Activated CD4-positive, alpha-beta memory T cell treated with anti-CD3 and anti-CD28 coated beads for 36 hours (primary cell): ENCODE measurements at regions of chr17 and their contacts with region 1.

Region 1: GRCh38 chr17:49997791-49998703 is 3.0 kb upstream of the DLX3 start:
- DNase-seq: peak; percentile 89
- H3K4me3 Mint-ChIP-seq: no peak overlapping the region
- H3K27ac Mint-ChIP-seq: no peak overlapping the region
- H3K4me1 Mint-ChIP-seq: peaks cover 22% of the 10 kb centered on the region
- H3K27me3 Mint-ChIP-seq: peaks cover 70% of the 10 kb centered on the region

Region 2: DNA sequence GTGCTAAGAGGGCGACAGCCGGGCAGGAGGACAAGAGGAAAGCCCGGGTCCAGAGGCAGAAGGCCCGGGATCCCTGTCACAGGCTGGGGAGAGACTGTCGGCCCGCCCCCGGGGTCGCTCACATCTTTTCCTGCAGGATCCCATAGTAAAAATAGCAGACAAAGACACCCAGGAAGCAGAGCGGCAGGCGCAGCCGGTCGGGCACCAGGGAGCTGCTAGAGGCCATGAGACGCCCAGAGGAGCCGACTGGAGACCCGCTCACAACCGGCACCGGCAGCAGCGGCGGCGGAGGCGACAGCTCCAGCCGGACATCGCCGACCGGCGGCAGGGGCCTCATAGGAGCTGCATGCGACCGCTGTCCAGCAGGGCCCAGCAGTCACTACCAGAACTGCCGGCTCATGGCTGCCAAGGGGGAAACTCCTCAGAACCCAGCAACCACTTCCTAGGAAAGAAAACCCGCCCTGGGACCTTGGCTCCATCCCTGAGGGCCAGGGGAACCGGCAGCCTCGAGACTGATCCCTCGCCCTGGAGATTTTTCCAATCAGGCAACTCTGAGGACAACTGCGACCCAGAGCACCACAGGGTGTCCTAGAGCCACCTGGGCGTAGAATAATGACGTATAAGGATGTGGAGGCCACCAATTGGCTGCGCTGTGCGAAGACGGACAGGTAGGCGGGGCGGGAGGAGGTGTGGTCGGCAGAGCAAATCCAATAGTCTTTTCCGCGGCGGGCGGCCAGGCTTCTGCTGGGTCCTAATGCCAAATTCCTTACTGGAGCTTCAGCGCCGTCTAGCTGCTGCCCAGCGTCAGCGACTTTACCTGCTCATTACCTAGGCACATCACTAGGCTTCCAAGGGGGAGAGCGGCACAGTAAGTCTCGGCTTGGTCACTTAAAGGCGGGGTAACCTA is 290.2 kb before region 1 on chr17 and contains the start of gene SLC35B1:
- CTCF ChIA-PET with region 1: interaction called, 5 read pairs
- POLR2A ChIA-PET with region 1: no interaction called
- intact Hi-C with region 1: loop called (anchors 10 kb)
- DNase-seq: peak; percentile 99
- H3K4me3 Mint-ChIP-seq: peak within 1 kb of the TSS; percentile 91
- H3K27ac Mint-ChIP-seq: peak within 1 kb of the TSS; percentile 98
- H3K4me1 Mint-ChIP-seq: peaks cover 42% of the 10 kb centered on the region
- H3K27me3 Mint-ChIP-seq: no peaks in the 10 kb centered on the region
- total RNA-seq, gene SLC35B1: 48.3 to 54.1 TPM

Region 3: DNA sequence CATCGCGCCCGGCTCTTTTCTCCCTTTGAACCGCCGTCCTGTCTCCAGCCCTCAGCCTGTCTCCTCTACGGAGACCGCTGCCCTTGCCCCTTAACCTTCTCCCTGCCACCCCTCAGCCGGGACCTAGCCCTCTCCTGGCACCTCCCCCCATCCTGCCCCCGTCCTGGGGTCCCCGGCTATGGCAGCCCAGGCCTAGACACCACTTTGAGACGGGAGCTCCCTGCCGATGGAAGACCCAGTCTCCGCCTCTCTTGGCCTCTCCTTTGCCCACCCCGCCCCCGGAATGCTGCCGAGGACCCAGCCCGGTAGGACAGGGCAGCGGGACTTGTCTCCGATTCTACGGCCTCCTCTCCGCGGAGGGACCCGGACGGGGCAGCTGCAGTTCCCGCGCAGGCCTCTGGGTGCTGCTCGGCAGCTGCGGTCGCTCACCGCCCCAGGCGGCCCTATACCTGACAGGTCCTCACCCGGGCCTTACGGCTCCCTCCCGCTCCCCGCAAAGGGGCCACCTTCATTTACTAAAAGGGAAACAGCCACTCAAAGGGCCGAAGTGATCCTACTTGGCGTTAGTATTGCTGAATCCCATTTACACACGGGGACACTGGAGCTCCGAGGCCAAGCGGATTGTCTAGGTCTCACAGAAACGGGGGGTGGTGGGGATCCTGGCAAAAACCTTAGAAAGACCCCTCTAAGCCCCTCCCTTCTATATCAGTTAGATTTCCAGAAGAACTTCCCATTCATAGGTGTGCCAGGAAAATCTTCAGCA is 117.6 kb before region 1 on chr17:
- CTCF ChIA-PET with region 1: interaction called, 138 read pairs
- POLR2A ChIA-PET with region 1: interaction called, 4 read pairs
- intact Hi-C with region 1: loop called (anchors 1 kb)
- DNase-seq: peak; percentile 84
- H3K4me3 Mint-ChIP-seq: no peak overlapping the region
- H3K27ac Mint-ChIP-seq: no peak overlapping the region
- H3K4me1 Mint-ChIP-seq: peaks cover 4% of the 10 kb centered on the region
- H3K27me3 Mint-ChIP-seq: peaks cover 31% of the 10 kb centered on the region

Region 4: GRCh38 chr17:49920064-49920785 is 77.8 kb before region 1 on chr17:
- CTCF ChIA-PET with region 1: interaction called, 19 read pairs
- POLR2A ChIA-PET with region 1: no interaction called
- intact Hi-C with region 1: no loop called
- DNase-seq: no peak
- H3K4me3 Mint-ChIP-seq: no peak overlapping the region
- H3K27ac Mint-ChIP-seq: no peak overlapping the region
- H3K4me1 Mint-ChIP-seq: no peaks in the 10 kb centered on the region
- H3K27me3 Mint-ChIP-seq: peaks cover 14% of the 10 kb centered on the region

Region 5: DNA sequence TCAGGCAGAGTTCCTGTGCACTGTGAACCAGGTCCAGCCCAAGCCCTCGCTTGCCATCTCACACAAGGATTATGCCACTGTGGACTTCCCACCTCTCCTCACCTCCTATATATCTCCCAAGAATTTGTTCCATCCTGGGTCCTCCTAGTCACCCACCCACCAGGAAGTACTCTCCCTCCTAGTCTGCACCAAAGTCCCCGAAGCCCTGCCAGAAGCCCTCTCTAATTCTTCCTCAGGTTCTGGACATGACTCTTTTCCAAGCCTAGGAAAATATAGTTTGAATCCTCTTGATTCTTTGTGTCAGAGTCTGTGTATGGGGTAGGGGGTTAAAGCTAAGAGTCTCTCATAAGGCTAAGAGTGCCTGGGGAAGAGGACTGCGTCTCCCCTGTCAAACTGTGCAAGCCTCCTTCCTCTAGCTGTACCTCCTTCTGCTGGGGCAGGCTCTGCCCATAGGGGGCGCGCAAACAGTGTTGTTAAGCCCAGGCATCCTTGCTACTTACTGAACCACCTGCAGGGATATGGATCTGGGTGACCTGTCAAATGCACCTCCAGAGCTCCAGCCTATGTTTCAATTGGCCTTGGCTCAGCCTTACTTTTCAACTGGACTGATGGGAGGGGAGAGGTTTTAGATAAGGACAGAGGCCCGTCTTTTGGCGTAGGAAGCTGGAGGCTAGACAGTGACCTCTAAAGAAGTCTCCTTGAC is 45.7 kb before region 1 on chr17:
- CTCF ChIA-PET with region 1: interaction called, 264 read pairs
- POLR2A ChIA-PET with region 1: interaction called, 9 read pairs
- intact Hi-C with region 1: loop called (anchors 1 kb)
- DNase-seq: peak; percentile 88
- H3K4me3 Mint-ChIP-seq: no peak overlapping the region
- H3K27ac Mint-ChIP-seq: no peak overlapping the region
- H3K4me1 Mint-ChIP-seq: no peaks in the 10 kb centered on the region
- H3K27me3 Mint-ChIP-seq: peaks cover 47% of the 10 kb centered on the region

Region 6: GRCh38 chr17:50009282-50009681 is 11.2 kb after region 1 on chr17:
- CTCF ChIA-PET with region 1: interaction called, 25 read pairs
- POLR2A ChIA-PET with region 1: no interaction called
- intact Hi-C with region 1: no loop called
- DNase-seq: no peak
- H3K4me3 Mint-ChIP-seq: no peak overlapping the region
- H3K27ac Mint-ChIP-seq: no peak overlapping the region
- H3K4me1 Mint-ChIP-seq: no peaks in the 10 kb centered on the region
- H3K27me3 Mint-ChIP-seq: peaks cover 27% of the 10 kb centered on the region

Region 7: GRCh38 chr17:50094753-50095619 is 96.9 kb after region 1 on chr17 and contains the start of gene PDK2:
- CTCF ChIA-PET with region 1: interaction called, 32 read pairs
- POLR2A ChIA-PET with region 1: interaction called, 3 read pairs
- intact Hi-C with region 1: no loop called
- DNase-seq: peak; percentile 97
- H3K4me3 Mint-ChIP-seq: peak within 1 kb of the TSS; percentile 82
- H3K27ac Mint-ChIP-seq: peak within 1 kb of the TSS; percentile 83
- H3K4me1 Mint-ChIP-seq: peaks cover 17% of the 10 kb centered on the region
- H3K27me3 Mint-ChIP-seq: no peaks in the 10 kb centered on the region
- total RNA-seq, gene PDK2: 13.3 to 14.6 TPM